HCT116 (cell line): ENCODE measurements at regions of chr2 and their contacts with region 1.

Region 1: DNA sequence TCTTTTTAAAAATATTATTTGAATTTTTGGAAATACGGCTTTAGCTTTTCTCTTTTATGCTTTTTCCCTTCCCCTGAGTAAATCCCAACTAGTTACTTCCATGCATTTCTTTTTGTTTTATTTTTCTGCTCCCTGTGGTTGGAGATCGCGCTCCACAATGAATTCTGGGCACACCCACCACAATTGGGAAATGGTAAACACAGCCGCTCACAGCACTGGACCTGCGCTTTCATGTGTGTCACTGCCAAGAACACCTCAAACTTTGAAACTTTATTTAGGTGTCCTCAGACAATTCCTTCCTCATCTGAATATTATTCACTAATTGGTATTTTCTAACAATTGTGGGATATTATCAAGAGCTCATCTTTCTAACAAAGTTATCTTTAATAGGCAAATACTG is 82.8 kb upstream of the TMEM18 start:
- DNase-seq: no peak
- ATAC-seq: no peak
- H3K4me3 ChIP-seq: no peak overlapping the region
- H3K27ac ChIP-seq: no peak overlapping the region
- H3K4me1 ChIP-seq: no peaks in the 10 kb centered on the region
- H3K27me3 ChIP-seq: peaks cover 10% of the 10 kb centered on the region; the same call in 1 of the 2 replicates
- CTCF ChIP-seq: no peak
- POLR2A ChIP-seq: no peak
- RAD21 ChIP-seq: no peak

Region 2: GRCh38 chr2:778731-779350 is 18.8 kb after region 1 on chr2:
- CTCF ChIA-PET with region 1: no interaction called
- POLR2A ChIA-PET with region 1: no interaction called
- RAD21 ChIA-PET with region 1: no interaction called
- intact Hi-C with region 1: loop called (anchors 1 kb)
- DNase-seq: no peak
- ATAC-seq: no peak
- H3K4me3 ChIP-seq: no peak overlapping the region
- H3K27ac ChIP-seq: no peak overlapping the region
- H3K4me1 ChIP-seq: peaks cover 4 to 9% of the 10 kb centered on the region in 2 experiments; a peak in 3 of 4 replicates
- H3K27me3 ChIP-seq: no peaks in the 10 kb centered on the region
- CTCF ChIP-seq: no peak
- POLR2A ChIP-seq: no peak
- RAD21 ChIP-seq: no peak

Region 3: GRCh38 chr2:1101982-1102590 is 342.1 kb after region 1 on chr2:
- CTCF ChIA-PET with region 1: no interaction called
- POLR2A ChIA-PET with region 1: no interaction called
- RAD21 ChIA-PET with region 1: no interaction called
- intact Hi-C with region 1: no loop called
- DNase-seq: no peak
- ATAC-seq: no peak
- H3K4me3 ChIP-seq: no peak overlapping the region
- H3K27ac ChIP-seq: no peak overlapping the region
- H3K4me1 ChIP-seq: no peaks in the 10 kb centered on the region
- H3K27me3 ChIP-seq: no peaks in the 10 kb centered on the region; the same call in 1 of the 2 replicates
- CTCF ChIP-seq: no peak
- POLR2A ChIP-seq: no peak
- RAD21 ChIP-seq: no peak

Region 4: DNA sequence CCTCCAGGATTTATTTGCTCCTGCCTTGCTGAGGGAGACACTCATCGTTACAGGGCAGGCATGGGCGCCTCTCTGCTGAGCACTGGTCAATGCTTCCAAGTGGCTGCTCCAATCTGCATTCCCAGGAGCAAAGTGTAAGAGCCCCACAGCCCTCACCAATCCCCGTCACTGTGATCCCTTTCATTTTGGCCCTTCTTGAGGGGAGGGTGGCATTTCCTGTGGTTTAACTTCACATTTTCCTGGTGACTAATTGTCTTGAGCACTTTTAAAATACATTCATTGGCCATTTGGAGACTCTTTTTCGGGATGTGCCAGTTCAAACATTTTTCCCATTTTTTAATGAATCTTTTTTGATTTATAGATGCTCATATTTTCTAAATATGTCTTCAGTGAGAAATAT is 686.3 kb after region 1 on chr2:
- CTCF ChIA-PET with region 1: no interaction called
- POLR2A ChIA-PET with region 1: no interaction called
- RAD21 ChIA-PET with region 1: no interaction called
- intact Hi-C with region 1: no loop called
- DNase-seq: no peak
- ATAC-seq: no peak
- H3K4me3 ChIP-seq: no peak overlapping the region
- H3K27ac ChIP-seq: no peak overlapping the region
- H3K4me1 ChIP-seq: no peaks in the 10 kb centered on the region
- H3K27me3 ChIP-seq: peaks cover 17% of the 10 kb centered on the region
- CTCF ChIP-seq: no peak
- POLR2A ChIP-seq: no peak
- RAD21 ChIP-seq: no peak

Region 5: GRCh38 chr2:2286592-2286991 is 1526.6 kb after region 1 on chr2:
- CTCF ChIA-PET with region 1: no interaction called
- POLR2A ChIA-PET with region 1: no interaction called
- RAD21 ChIA-PET with region 1: no interaction called
- intact Hi-C with region 1: no loop called
- DNase-seq: no peak
- ATAC-seq: no peak
- H3K4me3 ChIP-seq: no peak overlapping the region
- H3K27ac ChIP-seq: no peak overlapping the region
- H3K4me1 ChIP-seq: no peaks in the 10 kb centered on the region
- H3K27me3 ChIP-seq: no peaks in the 10 kb centered on the region
- CTCF ChIP-seq: no peak
- POLR2A ChIP-seq: no peak
- RAD21 ChIP-seq: no peak